A673 (cell line): ENCODE measurements at regions of chr11 and their contacts with region 1.

Region 1: DNA sequence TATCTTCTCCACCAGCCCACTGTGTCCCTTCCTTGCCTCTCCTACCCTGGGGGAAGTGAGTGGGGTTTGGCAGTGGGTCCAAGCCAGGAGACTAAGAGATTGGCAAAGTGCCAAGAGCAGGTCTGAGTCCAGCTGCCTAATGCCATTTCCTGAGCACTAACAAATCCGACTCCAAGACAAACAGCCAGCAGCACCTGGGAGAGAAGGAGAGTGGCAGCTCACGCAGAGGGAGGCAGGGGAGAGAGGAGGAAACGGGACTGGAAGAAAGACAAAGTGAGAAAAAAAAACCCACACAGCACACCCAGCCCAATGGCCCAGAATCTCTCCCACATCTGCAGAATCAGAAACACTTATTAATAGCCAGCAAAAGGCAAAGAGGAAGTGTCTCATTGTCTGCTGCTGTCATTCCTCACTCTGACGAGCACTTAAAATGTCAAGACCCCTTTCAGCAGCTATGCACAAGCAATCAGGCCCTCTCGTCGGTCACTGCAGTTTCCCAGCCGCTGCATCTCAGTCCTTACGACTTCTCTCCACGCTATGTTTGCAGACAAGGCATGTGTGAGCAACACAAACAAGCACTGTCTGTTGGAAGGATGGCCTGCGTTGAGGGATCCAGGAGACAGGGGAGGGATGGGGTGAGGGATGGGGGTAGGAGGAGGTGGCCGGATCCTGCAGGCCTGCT is 558.4 kb upstream of the CADM1 start:
- DNase-seq: no peak
- H3K4me3 ChIP-seq: no peak overlapping the region
- H3K27ac ChIP-seq: no peak overlapping the region
- H3K4me1 ChIP-seq: no peaks in the 10 kb centered on the region
- H3K27me3 ChIP-seq: peaks cover 13% of the 10 kb centered on the region
- CTCF ChIP-seq: no peak

Region 2: GRCh38 chr11:116122697-116123472 is 60.3 kb after region 1 on chr11:
- CTCF ChIA-PET with region 1: no interaction called
- POLR2A ChIA-PET with region 1: no interaction called
- intact Hi-C with region 1: no loop called
- DNase-seq: no peak
- H3K4me3 ChIP-seq: no peak overlapping the region
- H3K27ac ChIP-seq: no peak overlapping the region
- H3K4me1 ChIP-seq: no peaks in the 10 kb centered on the region
- H3K27me3 ChIP-seq: no peaks in the 10 kb centered on the region
- CTCF ChIP-seq: no peak

Region 3: GRCh38 chr11:116148056-116148455 is 85.4 kb after region 1 on chr11:
- CTCF ChIA-PET with region 1: no interaction called
- POLR2A ChIA-PET with region 1: interaction called, 11 read pairs
- intact Hi-C with region 1: no loop called
- DNase-seq: no peak
- H3K4me3 ChIP-seq: no peak overlapping the region
- H3K27ac ChIP-seq: no peak overlapping the region
- H3K4me1 ChIP-seq: no peaks in the 10 kb centered on the region
- H3K27me3 ChIP-seq: peaks cover 4% of the 10 kb centered on the region
- CTCF ChIP-seq: no peak